Adrenal gland (tissue), 19 donors: ENCODE measurements at regions of chr14 and their contacts with region 1.

Region 1: DNA sequence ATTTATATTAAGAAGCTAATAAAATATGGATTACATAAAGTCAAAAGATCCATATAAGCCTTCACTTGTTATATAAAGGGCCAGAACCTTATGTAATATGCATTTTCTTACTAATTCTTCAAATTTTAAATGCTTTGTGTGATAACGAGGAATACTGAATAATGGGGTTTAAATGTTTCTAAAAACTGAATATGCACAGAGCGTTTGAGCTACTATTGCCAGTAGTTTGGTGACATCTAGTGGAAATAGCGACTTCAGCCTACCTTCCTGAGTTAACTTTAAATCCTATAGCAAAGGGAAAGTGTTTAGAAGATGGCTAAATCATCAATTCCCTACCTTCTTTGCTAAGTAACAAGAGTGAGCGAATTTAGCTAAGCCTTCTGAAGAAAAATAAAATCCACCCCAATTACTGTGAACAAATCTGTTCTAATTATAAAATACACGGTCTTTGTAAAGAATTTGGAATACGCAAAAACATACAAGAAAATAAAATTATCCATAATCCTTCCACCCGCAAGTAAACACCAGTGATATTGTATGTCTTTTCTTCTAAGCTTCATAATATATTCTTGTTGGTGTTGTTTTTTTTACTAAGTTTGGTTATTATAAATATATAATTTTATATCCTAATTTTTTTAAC is 115.5 kb upstream of the G2E3 start:
- DNase-seq: peak in 2 of 7 donors; percentile 14 to 22
- H3K4me3 ChIP-seq: no peak overlapping the region
- H3K27ac ChIP-seq: no peak overlapping the region
- H3K4me1 ChIP-seq: no peaks in the 10 kb centered on the region
- H3K27me3 ChIP-seq: no peaks in the 10 kb centered on the region
- CTCF ChIP-seq: peak; percentile 30 to 65 (median 58)
- POLR2A ChIP-seq: no peak

Region 2: DNA sequence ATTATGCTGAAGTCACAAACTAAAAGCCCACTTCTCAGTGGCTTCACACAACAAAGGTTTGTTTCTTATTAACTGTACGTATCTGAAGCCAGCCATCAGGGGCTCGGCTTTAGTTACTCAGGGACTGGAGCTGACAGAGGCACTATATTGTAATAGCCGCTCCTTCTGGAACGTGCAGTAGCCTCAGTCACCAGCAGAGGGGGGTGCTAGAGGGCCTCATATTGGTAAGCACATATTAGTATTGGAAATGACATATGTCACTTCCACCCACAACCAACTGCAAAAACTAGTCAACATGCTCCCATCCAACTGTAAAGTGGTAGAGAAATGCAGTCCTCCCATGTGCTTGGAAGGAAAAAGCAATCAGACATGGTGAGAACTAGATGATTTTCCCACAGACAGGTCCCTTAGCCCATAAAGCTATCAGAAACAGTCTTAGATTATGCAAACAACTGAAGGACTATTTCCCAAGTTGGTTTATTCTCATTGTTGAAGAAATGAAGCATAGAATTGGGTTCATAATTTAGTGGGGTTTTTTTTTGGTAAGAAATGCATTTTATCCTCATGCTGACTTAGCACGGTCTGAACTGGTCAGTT is 68.1 kb before region 1 on chr14:
- intact Hi-C with region 1: loop called in 1 of 2 experiments (anchors 5 kb)
- DNase-seq: peak; percentile 50 to 84 (median 72)
- H3K4me3 ChIP-seq: no peak overlapping the region
- H3K27ac ChIP-seq: no peak overlapping the region
- H3K4me1 ChIP-seq: no peaks in the 10 kb centered on the region
- H3K27me3 ChIP-seq: no peaks in the 10 kb centered on the region
- CTCF ChIP-seq: peak; percentile 66 to 81 (median 72)
- POLR2A ChIP-seq: no peak